OCI-LY7 (cell line): ENCODE measurements at regions of chr12 and their contacts with region 1.

Region 1: GRCh38 chr12:15208125-15208524 is 13.1 kb downstream of the RERG start:
- DNase-seq: no peak
- H3K4me3 ChIP-seq: no peak overlapping the region
- H3K27ac ChIP-seq: no peak overlapping the region
- H3K4me1 ChIP-seq: no peaks in the 10 kb centered on the region
- CTCF ChIP-seq: no peak

Region 2: DNA sequence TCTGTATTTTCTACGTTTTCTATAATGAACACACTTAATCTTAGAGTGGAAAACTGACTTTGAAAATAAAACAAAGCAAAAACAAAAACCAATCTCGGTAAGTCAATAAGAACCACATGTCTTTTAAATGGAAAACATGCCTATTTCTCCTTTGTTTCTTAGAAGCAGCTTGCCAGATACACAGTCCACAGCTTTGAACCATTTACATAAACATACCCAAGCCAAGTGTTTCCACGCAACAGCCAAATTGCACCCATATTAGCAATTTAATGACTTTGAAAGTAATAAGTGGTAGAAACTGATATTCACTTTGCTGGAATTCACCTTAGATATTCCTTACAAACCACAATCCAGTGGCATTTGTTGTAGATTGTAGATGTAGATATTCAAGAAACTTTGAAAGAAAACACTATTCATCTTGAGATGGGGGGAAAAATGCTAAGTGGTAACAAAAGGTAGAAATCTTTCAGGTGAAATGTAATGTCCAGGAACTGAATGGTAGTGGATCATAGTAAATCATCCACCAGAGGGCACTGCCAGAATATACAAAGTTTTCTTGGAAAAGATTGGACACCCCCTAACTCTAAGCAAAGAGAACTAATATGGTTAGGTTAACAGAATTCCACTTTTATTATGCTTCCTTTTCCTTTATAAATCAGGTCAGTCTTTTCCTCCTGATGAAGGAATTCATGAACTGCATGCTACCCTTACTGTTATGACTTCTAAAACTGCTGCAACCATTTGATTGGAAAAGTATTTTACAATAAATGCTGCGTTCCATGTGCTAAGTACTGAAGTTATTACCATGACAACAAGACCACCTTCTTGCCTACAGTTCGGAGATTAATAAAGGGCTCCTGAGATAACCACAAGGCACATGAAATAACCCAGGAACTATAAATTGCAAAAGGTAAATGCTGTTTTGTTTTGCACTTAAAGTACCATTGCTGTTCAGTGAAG is 56.7 kb before region 1 on chr12:
- CTCF ChIA-PET with region 1: no interaction called
- POLR2A ChIA-PET with region 1: no interaction called
- intact Hi-C with region 1: loop called (anchors 5 kb)
- DNase-seq: peak; percentile 21
- H3K4me3 ChIP-seq: no peak overlapping the region
- H3K27ac ChIP-seq: no peak overlapping the region
- H3K4me1 ChIP-seq: no peaks in the 10 kb centered on the region
- CTCF ChIP-seq: peak; percentile 77

Region 3: DNA sequence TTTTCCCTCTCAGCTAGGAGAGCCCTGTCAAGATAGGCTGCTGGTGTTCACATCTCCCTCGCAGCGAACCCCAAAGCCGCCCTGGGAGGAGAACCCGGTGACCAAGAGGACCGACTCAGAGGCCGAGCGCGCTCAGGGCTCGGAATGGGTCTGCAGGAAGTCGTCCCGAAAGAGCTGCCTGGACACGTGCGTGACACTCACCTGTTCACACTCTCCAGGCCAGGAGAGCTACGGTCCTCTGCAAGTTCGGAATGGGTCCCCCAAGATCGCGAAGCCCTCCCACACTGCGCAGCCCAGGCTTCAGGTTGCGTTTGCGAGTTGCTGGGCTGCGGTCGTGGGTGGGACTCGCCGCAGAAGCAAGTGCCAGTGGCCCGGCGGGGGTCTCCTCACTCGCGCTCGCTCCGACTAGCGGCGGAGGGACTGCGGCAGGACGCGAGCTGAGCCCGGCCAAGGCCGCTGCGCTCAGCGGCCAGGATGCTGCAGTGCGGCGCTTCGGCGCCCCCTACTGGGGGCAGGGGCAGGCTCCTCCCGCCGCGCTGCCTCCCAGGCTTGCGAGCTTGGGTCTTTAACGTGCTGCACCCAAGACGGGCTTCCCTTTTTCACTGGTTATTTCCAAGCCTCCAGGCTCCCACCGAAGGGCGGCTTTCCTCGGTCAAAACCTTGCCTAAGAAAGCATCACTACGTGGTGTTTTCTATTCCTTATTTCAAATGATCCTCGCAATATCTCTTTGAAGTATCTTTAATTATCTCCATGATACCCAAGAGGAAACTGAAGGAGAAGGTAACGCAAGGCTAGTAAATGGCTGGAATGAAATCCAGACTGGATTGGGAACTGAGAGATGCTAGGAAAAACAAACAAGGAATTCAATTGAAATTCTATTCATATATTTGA is 13.1 kb after region 1 on chr12 and contains the start of gene RERG:
- CTCF ChIA-PET with region 1: no interaction called
- POLR2A ChIA-PET with region 1: no interaction called
- intact Hi-C with region 1: no loop called
- DNase-seq: peak; percentile 63
- H3K4me3 ChIP-seq: no peak within 1 kb of the TSS
- H3K27ac ChIP-seq: no peak within 1 kb of the TSS
- H3K4me1 ChIP-seq: no peaks in the 10 kb centered on the region
- CTCF ChIP-seq: peak; percentile 81
- total RNA-seq, gene RERG: not detected in 2 replicates

Region 4: GRCh38 chr12:15428632-15429031 is 220.5 kb after region 1 on chr12:
- CTCF ChIA-PET with region 1: no interaction called
- POLR2A ChIA-PET with region 1: no interaction called
- intact Hi-C with region 1: no loop called
- DNase-seq: no peak
- H3K4me3 ChIP-seq: no peak overlapping the region
- H3K27ac ChIP-seq: no peak overlapping the region
- H3K4me1 ChIP-seq: no peaks in the 10 kb centered on the region
- CTCF ChIP-seq: no peak